CD8-positive, alpha-beta memory T cell (primary cell): ENCODE measurements at regions of chr1 and their contacts with region 1.

Region 1: DNA sequence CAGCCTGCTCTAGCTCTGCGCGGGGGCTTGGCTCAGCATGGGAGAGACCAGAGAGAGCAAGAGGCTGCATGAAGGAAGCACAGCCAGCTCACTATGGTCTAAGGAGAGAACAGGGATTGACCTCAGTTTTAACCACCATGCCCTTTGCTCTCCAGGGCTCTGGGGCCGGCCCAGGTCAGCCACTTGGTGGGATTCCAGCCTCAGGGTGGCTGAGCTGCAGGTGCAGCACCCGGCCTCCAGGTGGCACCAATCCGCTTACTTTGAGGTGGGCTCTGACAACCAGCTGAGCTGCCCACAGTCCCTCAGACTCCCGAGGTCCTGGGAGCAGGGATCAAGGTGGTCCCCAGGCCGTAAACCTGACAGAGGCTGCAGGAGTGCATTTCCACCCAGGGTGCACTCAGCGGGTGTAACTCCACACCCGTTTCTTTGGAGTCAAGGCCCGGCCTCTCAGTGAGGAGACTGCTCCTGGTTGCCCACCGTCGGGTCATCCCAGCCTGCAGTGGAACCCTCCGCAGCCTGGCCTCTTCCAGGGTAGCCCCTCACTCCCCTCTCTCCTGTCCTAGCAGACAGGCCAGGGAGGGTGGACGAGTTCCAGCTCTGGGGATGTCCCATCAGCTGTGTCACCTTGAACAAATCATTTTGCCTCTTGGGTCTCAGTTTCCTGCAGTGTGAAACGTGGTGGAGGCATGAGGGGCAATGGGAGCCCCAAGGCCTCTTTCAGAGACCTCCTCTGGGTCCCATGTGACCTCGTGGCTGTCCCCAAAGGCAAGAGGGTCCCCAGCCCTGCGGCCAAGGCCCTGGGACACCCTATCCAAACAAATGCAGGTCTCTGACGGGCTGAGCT is 607 bp upstream of the LGR6 start:
- DNase-seq: peak; percentile 38 to 69 (median 47)
- H3K4me3 ChIP-seq: no peak overlapping the region
- H3K4me3 Mint-ChIP-seq: peak overlapping the region in 3 of 7 donors; percentile 58 to 84 (median 63)
- H3K27ac ChIP-seq: no peak overlapping the region
- H3K27ac Mint-ChIP-seq: peak overlapping the region in 1 of 8 donors; percentile 75
- H3K4me1 ChIP-seq: peaks cover 18% of the 10 kb centered on the region
- H3K4me1 Mint-ChIP-seq: peaks cover 19 to 29% (median 19%) of the 10 kb centered on the region in 3 donors
- H3K27me3 ChIP-seq: peaks cover 13% of the 10 kb centered on the region
- H3K27me3 Mint-ChIP-seq: peaks cover 14 to 25% of the 10 kb centered on the region in 2 donors

Region 2: GRCh38 chr1:202154766-202155477 is 38.1 kb before region 1 on chr1:
- CTCF ChIA-PET with region 1: interaction called, 21 read pairs
- POLR2A ChIA-PET with region 1: no interaction called
- DNase-seq: peak in 4 of 5 donors; percentile 39 to 70 (median 46)
- H3K4me3 ChIP-seq: no peak overlapping the region
- H3K4me3 Mint-ChIP-seq: peak overlapping the region in 4 of 7 donors; percentile 8 to 38 (median 27)
- H3K27ac ChIP-seq: peak overlapping the region; percentile 0
- H3K27ac Mint-ChIP-seq: peak overlapping the region; percentile 70 to 97 (median 94)
- H3K4me1 ChIP-seq: peaks cover 42% of the 10 kb centered on the region
- H3K4me1 Mint-ChIP-seq: peaks cover 51 to 63% (median 59%) of the 10 kb centered on the region in 3 donors
- H3K27me3 ChIP-seq: no peaks in the 10 kb centered on the region
- H3K27me3 Mint-ChIP-seq: peaks cover 0 to 3% of the 10 kb centered on the region in 2 donors

Region 3: DNA sequence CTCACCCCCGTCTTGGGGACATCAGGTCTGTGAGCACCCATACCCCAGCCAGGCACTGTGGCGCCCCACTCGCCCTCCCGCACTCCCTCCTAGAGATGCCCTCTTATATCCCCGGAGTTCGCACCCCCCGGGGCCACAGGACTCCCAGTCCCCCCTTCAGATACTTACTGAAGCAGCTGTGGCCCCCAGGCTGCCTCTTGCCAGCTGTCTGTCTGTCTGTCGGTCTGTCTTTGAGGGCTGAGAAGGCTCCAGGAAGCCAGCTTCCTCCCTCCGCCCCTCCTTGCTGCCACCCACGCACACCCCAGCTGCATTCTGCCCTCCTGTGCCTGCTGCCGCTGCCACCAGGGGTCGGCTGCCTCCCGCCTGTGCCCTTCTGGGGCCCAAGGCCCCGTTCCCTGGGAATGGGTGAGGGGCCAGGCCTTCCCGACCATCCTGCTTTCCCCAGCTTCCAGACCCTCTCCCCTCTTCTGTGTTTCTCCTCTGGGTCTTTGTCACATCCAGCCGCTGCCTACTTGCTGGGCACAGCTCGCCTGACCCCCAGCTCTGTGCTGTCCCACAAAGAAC is 32.5 kb before region 1 on chr1 and contains the start of gene PTPN7:
- CTCF ChIA-PET with region 1: interaction called, 21 read pairs
- POLR2A ChIA-PET with region 1: no interaction called
- DNase-seq: peak; percentile 63 to 86 (median 75)
- H3K4me3 ChIP-seq: peak within 1 kb of the TSS; percentile 87
- H3K4me3 Mint-ChIP-seq: peak within 1 kb of the TSS; percentile 91 to 100 (median 96)
- H3K27ac ChIP-seq: peak within 1 kb of the TSS; percentile 97
- H3K27ac Mint-ChIP-seq: peak within 1 kb of the TSS; percentile 96 to 100 (median 98)
- H3K4me1 ChIP-seq: peaks cover 84% of the 10 kb centered on the region
- H3K4me1 Mint-ChIP-seq: peaks cover 82 to 99% (median 91%) of the 10 kb centered on the region in 3 donors
- H3K27me3 ChIP-seq: no peaks in the 10 kb centered on the region
- H3K27me3 Mint-ChIP-seq: peaks cover 0 to 2% of the 10 kb centered on the region in 2 donors
- total RNA-seq, gene PTPN7: 446 to 449 TPM

Region 4: GRCh38 chr1:202306535-202307345 is 113.7 kb after region 1 on chr1:
- CTCF ChIA-PET with region 1: interaction called, 64 read pairs
- POLR2A ChIA-PET with region 1: no interaction called
- DNase-seq: no peak
- H3K4me3 ChIP-seq: no peak overlapping the region
- H3K4me3 Mint-ChIP-seq: no peak overlapping the region
- H3K27ac ChIP-seq: no peak overlapping the region
- H3K27ac Mint-ChIP-seq: peak overlapping the region in 1 of 8 donors; percentile 14
- H3K4me1 ChIP-seq: no peaks in the 10 kb centered on the region
- H3K4me1 Mint-ChIP-seq: peaks cover 0 to 3% (median 0%) of the 10 kb centered on the region in 3 donors
- H3K27me3 ChIP-seq: no peaks in the 10 kb centered on the region
- H3K27me3 Mint-ChIP-seq: peaks cover 0 to 4% of the 10 kb centered on the region in 2 donors

Region 5: GRCh38 chr1:202315576-202316168 is 122.7 kb after region 1 on chr1:
- CTCF ChIA-PET with region 1: interaction called, 64 read pairs
- POLR2A ChIA-PET with region 1: no interaction called
- DNase-seq: peak; percentile 48 to 79 (median 61)
- H3K4me3 ChIP-seq: no peak overlapping the region
- H3K4me3 Mint-ChIP-seq: no peak overlapping the region
- H3K27ac ChIP-seq: no peak overlapping the region
- H3K27ac Mint-ChIP-seq: no peak overlapping the region
- H3K4me1 ChIP-seq: no peaks in the 10 kb centered on the region
- H3K4me1 Mint-ChIP-seq: peaks cover 0 to 7% (median 2%) of the 10 kb centered on the region in 3 donors
- H3K27me3 ChIP-seq: no peaks in the 10 kb centered on the region
- H3K27me3 Mint-ChIP-seq: peaks cover 3 to 4% of the 10 kb centered on the region in 2 donors